A549 (cell line): ENCODE measurements at regions of chr17 and their contacts with region 1.

Region 1: GRCh38 chr17:57707851-57708291 is 37.2 kb downstream of the CCDC182 start:
- DNase-seq: no peak
- ATAC-seq: peak; percentile 36 to 51; a peak in 4 of 6 replicates
- H3K4me3 ChIP-seq: no peak overlapping the region
- H3K27ac ChIP-seq: no peak overlapping the region
- H3K4me1 ChIP-seq: no peaks in the 10 kb centered on the region
- CTCF ChIP-seq: no peak
- EP300 ChIP-seq: no peak
- POLR2A ChIP-seq: no peak
- RAD21 ChIP-seq: no peak

Region 2: DNA sequence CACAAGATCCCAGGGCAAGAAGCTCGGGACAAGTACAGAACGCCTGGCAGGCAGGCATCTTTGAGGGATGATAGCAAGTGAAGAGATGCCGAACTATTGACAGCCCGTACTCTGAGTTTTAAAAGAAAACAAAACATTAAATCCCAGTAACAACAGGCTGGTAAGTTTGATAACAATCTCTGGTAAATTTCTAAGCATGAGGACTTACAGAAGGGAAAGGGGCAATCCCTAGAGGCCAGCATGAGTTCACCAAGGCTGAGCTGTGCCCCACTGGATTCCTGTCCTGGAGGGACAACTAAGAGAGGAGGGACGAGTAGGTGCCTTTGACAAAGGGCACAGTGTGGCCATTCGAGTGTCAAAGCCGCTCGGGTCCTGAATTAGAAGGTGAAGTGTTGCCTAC is 11.0 kb after region 1 on chr17:
- CTCF ChIA-PET with region 1: interaction called, 10 read pairs
- POLR2A ChIA-PET with region 1: no interaction called
- DNase-seq: no peak
- ATAC-seq: no peak
- H3K4me3 ChIP-seq: no peak overlapping the region
- H3K27ac ChIP-seq: no peak overlapping the region
- H3K4me1 ChIP-seq: no peaks in the 10 kb centered on the region
- CTCF ChIP-seq: no peak
- EP300 ChIP-seq: no peak
- POLR2A ChIP-seq: no peak
- RAD21 ChIP-seq: no peak